B cell (primary cell): ENCODE measurements at regions of chr3 and their contacts with region 1.

Region 1: DNA sequence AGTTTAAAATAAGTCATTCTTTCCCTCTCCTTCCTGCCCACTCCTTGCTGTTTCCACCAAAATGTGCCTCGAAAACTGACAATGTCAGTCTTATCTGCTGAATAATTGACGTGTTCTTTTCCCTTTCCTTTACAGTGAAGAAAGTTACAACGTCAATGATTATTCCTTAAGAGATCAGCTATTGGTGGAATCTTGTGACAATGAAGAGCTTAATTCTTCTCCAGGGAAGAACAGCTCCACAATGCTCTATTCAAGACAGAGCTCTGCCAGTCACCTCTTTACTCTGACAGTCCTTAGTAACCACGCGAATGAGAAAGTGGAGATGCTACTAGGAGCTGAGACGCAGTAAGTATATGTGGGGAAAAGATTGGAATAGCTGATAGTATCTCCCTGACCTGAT is 84.1 kb downstream of the DHX36 start:
- DNase-seq: no peak
- ATAC-seq: no peak
- H3K4me3 ChIP-seq: no peak overlapping the region
- H3K4me3 Mint-ChIP-seq: no peak overlapping the region
- H3K27ac ChIP-seq: no peak overlapping the region
- H3K27ac Mint-ChIP-seq: no peak overlapping the region
- H3K4me1 ChIP-seq: no peaks in the 10 kb centered on the region
- H3K4me1 Mint-ChIP-seq: no peaks in the 10 kb centered on the region
- H3K27me3 ChIP-seq: no peaks in the 10 kb centered on the region
- H3K27me3 Mint-ChIP-seq: peaks cover 8% of the 10 kb centered on the region
- CTCF ChIP-seq: no peak

Region 2: DNA sequence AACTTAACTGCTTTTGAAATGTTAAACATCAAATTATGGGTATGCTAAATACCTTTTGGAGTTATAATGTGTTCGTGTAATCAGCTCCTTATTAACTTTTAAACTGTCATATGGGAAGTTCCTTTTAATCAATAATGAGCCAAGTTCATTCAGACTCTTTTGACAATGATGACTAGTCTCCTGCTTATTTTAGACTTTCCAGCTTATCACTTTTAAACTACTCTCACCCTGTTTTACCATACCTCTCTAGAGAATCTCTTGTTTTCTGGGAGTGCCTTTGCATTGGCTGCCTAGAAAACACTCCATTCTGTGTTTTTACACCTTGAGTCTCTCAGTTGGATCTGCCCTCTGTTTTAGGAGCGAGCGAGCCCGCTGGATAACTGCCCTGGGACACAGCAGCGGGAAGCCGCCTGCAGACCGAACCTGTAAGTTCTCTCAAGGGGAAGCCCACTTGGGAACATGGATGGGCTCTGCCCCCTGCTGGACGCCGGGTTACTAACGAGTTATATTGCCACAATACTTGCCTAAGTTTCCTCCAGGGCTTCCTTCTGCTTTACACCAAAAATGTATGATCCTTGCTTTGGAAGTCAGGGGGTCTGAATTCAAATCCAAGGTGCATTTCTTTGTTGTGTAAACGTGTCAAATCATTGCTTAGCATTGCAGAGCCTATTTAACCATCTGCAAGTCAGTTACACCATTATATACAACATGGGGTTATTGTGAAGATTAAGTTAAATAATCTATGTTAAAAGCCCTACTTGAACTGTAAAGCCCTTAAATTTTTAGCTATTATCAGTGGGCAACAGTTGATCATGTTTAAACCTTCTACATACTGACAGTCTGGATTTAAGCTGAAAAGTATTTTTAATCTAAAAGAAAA is 12.8 kb after region 1 on chr3:
- CTCF ChIA-PET with region 1: interaction called, 10 read pairs
- POLR2A ChIA-PET with region 1: no interaction called
- intact Hi-C with region 1: no loop called
- DNase-seq: peak; percentile 63
- ATAC-seq: peak; percentile 45
- H3K4me3 ChIP-seq: no peak overlapping the region
- H3K4me3 Mint-ChIP-seq: no peak overlapping the region
- H3K27ac ChIP-seq: no peak overlapping the region
- H3K27ac Mint-ChIP-seq: no peak overlapping the region
- H3K4me1 ChIP-seq: no peaks in the 10 kb centered on the region
- H3K4me1 Mint-ChIP-seq: peaks cover 3% of the 10 kb centered on the region
- H3K27me3 ChIP-seq: no peaks in the 10 kb centered on the region
- H3K27me3 Mint-ChIP-seq: no peaks in the 10 kb centered on the region
- CTCF ChIP-seq: peak; percentile 80